Mammary epithelial cell (primary cell): ENCODE measurements at regions of chr9 and their contacts with region 1.

Region 1: GRCh38 chr9:34363619-34364351 is 12.9 kb downstream of the MYORG start:
- DNase-seq: no peak
- H3K4me3 ChIP-seq: no peak overlapping the region
- H3K27ac ChIP-seq: no peak overlapping the region
- H3K4me1 ChIP-seq: no peaks in the 10 kb centered on the region
- H3K27me3 ChIP-seq: no peaks in the 10 kb centered on the region
- CTCF ChIP-seq: no peak

Region 2: DNA sequence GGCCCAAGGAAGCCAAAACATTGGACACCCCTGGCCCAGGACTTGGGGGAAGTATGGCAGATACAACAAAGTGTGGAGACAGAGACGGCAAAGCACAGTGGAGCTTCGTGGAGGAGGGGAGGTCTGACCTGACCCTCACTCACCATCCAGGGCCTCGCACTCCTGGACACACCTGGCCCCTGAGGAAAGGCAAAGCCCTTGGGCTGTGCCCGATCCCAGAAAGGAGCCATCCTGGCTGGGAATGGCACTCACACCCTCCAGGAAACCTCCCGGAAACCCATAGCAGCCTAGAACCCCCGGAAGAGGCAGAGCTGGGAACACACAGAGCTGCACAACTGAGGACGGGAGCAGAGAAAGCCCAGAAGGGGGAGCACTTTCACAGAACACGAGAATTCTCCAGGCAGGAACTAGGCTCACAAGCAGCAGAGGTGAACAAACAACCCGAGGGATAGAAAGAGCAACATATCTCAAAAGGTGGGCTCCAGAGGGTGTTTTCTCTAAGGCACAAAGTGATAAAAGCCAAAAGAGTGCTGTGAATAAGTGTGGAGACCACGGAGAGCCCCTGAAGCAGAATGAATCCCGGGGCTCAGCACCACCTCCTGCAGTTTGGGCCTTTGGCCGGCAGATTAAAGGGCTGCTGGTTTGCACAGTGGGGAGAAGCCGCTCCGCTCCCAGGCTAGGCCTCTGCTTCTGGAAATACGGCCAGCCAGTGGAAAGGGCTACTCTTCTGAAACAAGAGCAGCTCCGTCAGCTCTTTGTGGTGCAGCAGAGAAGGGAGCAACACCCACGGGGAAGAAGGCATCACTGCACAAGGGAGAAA is 438.6 kb before region 1 on chr9:
- CTCF ChIA-PET with region 1: no interaction called
- dilution Hi-C with region 1: loop called (anchors 25 kb)
- in situ Hi-C with region 1: no loop called
- intact Hi-C with region 1: no loop called
- DNase-seq: no peak
- H3K4me3 ChIP-seq: no peak overlapping the region
- H3K27ac ChIP-seq: no peak overlapping the region
- H3K4me1 ChIP-seq: no peaks in the 10 kb centered on the region
- H3K27me3 ChIP-seq: no peaks in the 10 kb centered on the region
- CTCF ChIP-seq: peak; percentile 32 to 52

Region 3: GRCh38 chr9:34289159-34289558 is 74.6 kb before region 1 on chr9:
- CTCF ChIA-PET with region 1: no interaction called
- dilution Hi-C with region 1: loop called (anchors 5 kb)
- in situ Hi-C with region 1: no loop called
- intact Hi-C with region 1: no loop called
- DNase-seq: no peak
- H3K4me3 ChIP-seq: no peak overlapping the region
- H3K27ac ChIP-seq: no peak overlapping the region
- H3K4me1 ChIP-seq: no peaks in the 10 kb centered on the region
- H3K27me3 ChIP-seq: no peaks in the 10 kb centered on the region
- CTCF ChIP-seq: no peak